CD8-positive, alpha-beta T cell (primary cell): ENCODE measurements at regions of chr5 and their contacts with region 1.

Region 1: DNA sequence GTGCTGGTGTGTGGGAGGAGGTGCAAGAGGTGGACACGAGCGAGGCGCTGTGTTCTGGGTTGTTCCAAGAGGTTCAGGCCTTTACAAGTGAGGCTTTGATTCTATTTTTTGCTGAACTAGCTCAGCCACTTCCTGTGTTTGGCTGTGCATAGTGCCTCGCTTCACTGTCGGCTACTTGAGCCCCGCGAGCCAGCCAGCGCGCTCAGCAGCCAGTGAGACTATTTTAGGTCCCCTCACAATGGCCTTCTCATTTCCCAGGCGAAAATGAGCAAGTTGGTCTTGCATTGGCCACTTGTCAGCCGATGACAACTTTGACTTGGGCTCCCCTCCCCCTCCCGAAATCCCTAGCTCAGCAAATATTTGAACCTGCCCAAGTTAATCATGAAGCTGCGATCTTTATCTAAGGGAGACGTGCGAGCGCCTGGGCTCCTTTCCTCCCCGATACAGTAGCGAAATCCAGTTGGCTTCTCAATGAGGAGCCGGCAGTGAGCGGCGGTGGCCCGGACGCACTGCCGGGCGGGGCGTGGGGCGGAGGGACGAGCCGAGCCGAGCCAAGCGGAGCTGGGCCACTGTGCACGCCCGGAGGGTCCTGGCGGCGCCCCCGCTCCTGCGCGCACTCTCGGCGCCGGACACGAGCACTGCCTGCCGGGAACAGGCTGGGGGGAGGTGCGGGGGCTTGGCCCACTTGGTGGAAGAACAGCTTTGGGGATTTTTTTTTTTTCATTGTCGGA is 72.6 kb downstream of the PIK3R1 start:
- DNase-seq: peak; percentile 8 to 78 (median 52)
- ATAC-seq: peak; percentile 69
- H3K4me3 ChIP-seq: peak overlapping the region; percentile 52 to 64
- H3K4me3 Mint-ChIP-seq: peak overlapping the region; percentile 93
- H3K27ac ChIP-seq: peak overlapping the region; percentile 40 to 74
- H3K27ac Mint-ChIP-seq: peak overlapping the region; percentile 93
- H3K4me1 ChIP-seq: peaks cover 74% of the 10 kb centered on the region
- H3K4me1 Mint-ChIP-seq: peaks cover 87% of the 10 kb centered on the region
- H3K27me3 ChIP-seq: no peaks in the 10 kb centered on the region
- H3K27me3 Mint-ChIP-seq: no peaks in the 10 kb centered on the region
- CTCF ChIP-seq: no peak

Region 2: GRCh38 chr5:67003935-67004729 is 1284.0 kb before region 1 on chr5:
- CTCF ChIA-PET with region 1: no interaction called
- POLR2A ChIA-PET with region 1: no interaction called
- intact Hi-C with region 1: loop called in 1 of 2 experiments (anchors 2 kb)
- DNase-seq: peak; percentile 70 to 93 (median 87)
- ATAC-seq: peak; percentile 78
- H3K4me3 ChIP-seq: peak overlapping the region; percentile 75 to 85
- H3K4me3 Mint-ChIP-seq: peak overlapping the region; percentile 95
- H3K27ac ChIP-seq: peak overlapping the region; percentile 59 to 75
- H3K27ac Mint-ChIP-seq: peak overlapping the region; percentile 98
- H3K4me1 ChIP-seq: peaks cover 36% of the 10 kb centered on the region
- H3K4me1 Mint-ChIP-seq: peaks cover 52% of the 10 kb centered on the region
- H3K27me3 ChIP-seq: no peaks in the 10 kb centered on the region
- H3K27me3 Mint-ChIP-seq: no peaks in the 10 kb centered on the region
- CTCF ChIP-seq: no peak

Region 3: GRCh38 chr5:68215208-68215897 is 72.8 kb before region 1 on chr5 and contains the start of gene PIK3R1:
- CTCF ChIA-PET with region 1: interaction called, 7 read pairs
- POLR2A ChIA-PET with region 1: interaction called, 10 read pairs
- intact Hi-C with region 1: loop called in 1 of 2 experiments (anchors 5 kb)
- DNase-seq: peak; percentile 84 to 96 (median 91)
- ATAC-seq: peak; percentile 78
- H3K4me3 ChIP-seq: peak within 1 kb of the TSS; percentile 81 to 93
- H3K4me3 Mint-ChIP-seq: peak within 1 kb of the TSS; percentile 87
- H3K27ac ChIP-seq: peak within 1 kb of the TSS; percentile 83 to 94
- H3K27ac Mint-ChIP-seq: peak within 1 kb of the TSS; percentile 96
- H3K4me1 ChIP-seq: peaks cover 35% of the 10 kb centered on the region
- H3K4me1 Mint-ChIP-seq: peaks cover 46% of the 10 kb centered on the region
- H3K27me3 ChIP-seq: no peaks in the 10 kb centered on the region
- H3K27me3 Mint-ChIP-seq: no peaks in the 10 kb centered on the region
- CTCF ChIP-seq: no peak
- total RNA-seq, gene PIK3R1: 461 to 470 TPM

Region 4: DNA sequence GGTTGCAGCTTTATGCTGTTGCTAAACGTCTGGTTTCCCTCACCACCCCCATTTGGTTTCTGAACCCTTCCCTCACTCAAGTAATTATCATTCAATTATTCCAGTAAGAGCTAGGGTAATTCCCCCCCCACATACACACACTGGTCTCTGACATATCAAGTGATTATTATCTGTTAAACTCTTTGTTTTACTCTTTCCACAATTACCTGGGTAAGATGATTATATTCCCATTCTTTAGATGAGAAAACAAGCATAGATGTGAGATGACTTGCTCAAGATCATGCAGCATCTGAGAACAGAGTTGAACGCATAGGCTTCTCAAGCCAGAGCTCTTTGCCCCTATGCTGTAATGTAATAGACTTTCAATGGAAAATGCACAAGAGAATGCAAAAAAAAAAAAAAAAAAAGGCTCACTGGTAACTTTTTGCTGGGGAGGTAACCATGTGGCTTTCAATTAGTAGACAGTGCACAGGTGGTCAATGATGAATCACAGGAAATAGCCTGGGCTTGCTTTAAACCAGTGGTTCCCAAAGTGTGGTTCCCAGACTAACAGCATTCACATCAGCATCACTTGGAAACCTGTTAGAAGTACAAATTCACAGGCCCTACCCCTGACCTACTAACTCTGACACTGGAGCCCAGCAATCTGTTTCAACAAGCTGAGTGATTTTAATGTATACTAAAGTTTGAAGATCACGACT is 15.0 kb after region 1 on chr5:
- CTCF ChIA-PET with region 1: interaction called, 15 read pairs
- POLR2A ChIA-PET with region 1: interaction called, 5 read pairs
- intact Hi-C with region 1: loop called in 1 of 2 experiments (anchors 1 kb)
- DNase-seq: peak in 2 of 9 experiments; percentile 26 to 57
- ATAC-seq: peak; percentile 37
- H3K4me3 ChIP-seq: no peak overlapping the region
- H3K4me3 Mint-ChIP-seq: no peak overlapping the region
- H3K27ac ChIP-seq: no peak overlapping the region
- H3K27ac Mint-ChIP-seq: peak overlapping the region; percentile 19
- H3K4me1 ChIP-seq: no peaks in the 10 kb centered on the region
- H3K4me1 Mint-ChIP-seq: peaks cover 20% of the 10 kb centered on the region
- H3K27me3 ChIP-seq: no peaks in the 10 kb centered on the region
- H3K27me3 Mint-ChIP-seq: no peaks in the 10 kb centered on the region
- CTCF ChIP-seq: no peak

Region 5: GRCh38 chr5:68460147-68460798 is 172.1 kb after region 1 on chr5:
- CTCF ChIA-PET with region 1: interaction called, 34 read pairs
- POLR2A ChIA-PET with region 1: no interaction called
- intact Hi-C with region 1: loop called (anchors 1 kb)
- DNase-seq: peak in 8 of 9 experiments; percentile 13 to 81 (median 42)
- ATAC-seq: peak; percentile 55
- H3K4me3 ChIP-seq: no peak overlapping the region
- H3K4me3 Mint-ChIP-seq: no peak overlapping the region
- H3K27ac ChIP-seq: no peak overlapping the region
- H3K27ac Mint-ChIP-seq: peak overlapping the region; percentile 19
- H3K4me1 ChIP-seq: peaks cover 13% of the 10 kb centered on the region
- H3K4me1 Mint-ChIP-seq: peaks cover 18% of the 10 kb centered on the region
- H3K27me3 ChIP-seq: no peaks in the 10 kb centered on the region
- H3K27me3 Mint-ChIP-seq: no peaks in the 10 kb centered on the region
- CTCF ChIP-seq: peak; percentile 80

Region 6: GRCh38 chr5:68745448-68745847 is 457.3 kb after region 1 on chr5:
- CTCF ChIA-PET with region 1: no interaction called
- POLR2A ChIA-PET with region 1: no interaction called
- intact Hi-C with region 1: loop called in 1 of 2 experiments (anchors 10 kb)
- DNase-seq: peak in 2 of 9 experiments; percentile 23 to 29
- ATAC-seq: no peak
- H3K4me3 ChIP-seq: no peak overlapping the region
- H3K4me3 Mint-ChIP-seq: no peak overlapping the region
- H3K27ac ChIP-seq: no peak overlapping the region
- H3K27ac Mint-ChIP-seq: no peak overlapping the region
- H3K4me1 ChIP-seq: no peaks in the 10 kb centered on the region
- H3K4me1 Mint-ChIP-seq: peaks cover 10% of the 10 kb centered on the region
- H3K27me3 ChIP-seq: peaks cover 0 to 2% of the 10 kb centered on the region in 2 experiments
- H3K27me3 Mint-ChIP-seq: peaks cover 8% of the 10 kb centered on the region
- CTCF ChIP-seq: no peak

Region 7: GRCh38 chr5:68962757-68963484 is 674.8 kb after region 1 on chr5:
- CTCF ChIA-PET with region 1: no interaction called
- POLR2A ChIA-PET with region 1: no interaction called
- intact Hi-C with region 1: loop called in 1 of 2 experiments (anchors 5 kb)
- DNase-seq: peak in 2 of 9 experiments; percentile 11 to 14
- ATAC-seq: no peak
- H3K4me3 ChIP-seq: no peak overlapping the region
- H3K4me3 Mint-ChIP-seq: no peak overlapping the region
- H3K27ac ChIP-seq: no peak overlapping the region
- H3K27ac Mint-ChIP-seq: no peak overlapping the region
- H3K4me1 ChIP-seq: no peaks in the 10 kb centered on the region
- H3K4me1 Mint-ChIP-seq: no peaks in the 10 kb centered on the region
- H3K27me3 ChIP-seq: peaks cover 0 to 4% of the 10 kb centered on the region in 2 experiments
- H3K27me3 Mint-ChIP-seq: no peaks in the 10 kb centered on the region
- CTCF ChIP-seq: no peak